Naive thymus-derived CD4-positive, alpha-beta T cell (primary cell): ENCODE measurements at regions of chr12 and their contacts with region 1.

Region 1: DNA sequence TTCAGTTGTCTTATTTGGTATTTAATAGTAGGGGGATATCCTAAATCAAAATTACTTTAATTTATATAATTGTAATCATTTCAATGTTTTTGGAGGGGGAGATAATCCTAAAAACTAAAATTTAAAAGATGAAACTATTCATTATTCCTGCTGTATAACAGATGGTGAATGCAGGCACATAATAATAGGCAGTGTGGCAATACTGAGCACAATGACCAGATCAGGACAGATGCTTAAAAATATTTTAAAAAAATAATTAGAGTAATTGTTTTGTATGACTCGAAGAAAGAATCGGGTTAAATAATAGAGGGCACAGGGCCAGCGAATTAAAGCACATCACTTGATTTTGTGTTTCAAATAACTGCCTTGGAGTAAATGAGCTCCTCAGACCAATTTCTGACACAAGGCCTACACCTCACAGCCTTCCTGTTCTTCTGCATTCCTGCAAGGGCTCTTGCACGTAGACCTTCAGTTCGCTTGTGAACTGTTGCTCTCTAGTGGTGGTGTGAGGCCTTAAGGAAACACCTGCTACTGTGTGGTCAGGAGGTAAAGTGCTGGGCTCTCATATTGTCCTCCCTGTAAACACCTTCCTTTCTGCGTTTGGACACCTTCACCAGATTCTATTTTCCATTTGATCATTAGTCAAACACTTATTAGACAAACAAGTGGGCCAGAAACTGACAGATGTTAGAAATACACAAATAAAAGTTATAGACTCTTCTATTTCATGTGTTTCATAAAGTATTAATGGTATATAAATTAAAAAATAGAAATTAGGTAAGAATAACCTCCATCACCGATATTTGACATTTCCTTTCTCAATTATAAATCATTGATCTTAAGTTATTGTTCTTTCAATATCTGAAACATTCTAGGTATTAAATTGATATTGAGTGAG is 29.3 kb upstream of the KLRF1 start:
- DNase-seq: peak in 8 of 9 donors; percentile 56 to 81 (median 73)
- ATAC-seq: peak; percentile 95
- H3K4me3 ChIP-seq: no peak overlapping the region
- H3K4me3 Mint-ChIP-seq: peak overlapping the region in 9 of 10 donors; percentile 6 to 53 (median 42)
- H3K27ac ChIP-seq: peak overlapping the region; percentile 64
- H3K27ac Mint-ChIP-seq: peak overlapping the region; percentile 39 to 89 (median 76)
- H3K4me1 ChIP-seq: peaks cover 38 to 44% of the 10 kb centered on the region in 2 donors
- H3K4me1 Mint-ChIP-seq: peaks cover 40 to 54% (median 50%) of the 10 kb centered on the region in 7 donors
- H3K27me3 ChIP-seq: no peaks in the 10 kb centered on the region
- H3K27me3 Mint-ChIP-seq: peaks cover 0 to 15% (median 0%) of the 10 kb centered on the region in 5 donors

Region 2: DNA sequence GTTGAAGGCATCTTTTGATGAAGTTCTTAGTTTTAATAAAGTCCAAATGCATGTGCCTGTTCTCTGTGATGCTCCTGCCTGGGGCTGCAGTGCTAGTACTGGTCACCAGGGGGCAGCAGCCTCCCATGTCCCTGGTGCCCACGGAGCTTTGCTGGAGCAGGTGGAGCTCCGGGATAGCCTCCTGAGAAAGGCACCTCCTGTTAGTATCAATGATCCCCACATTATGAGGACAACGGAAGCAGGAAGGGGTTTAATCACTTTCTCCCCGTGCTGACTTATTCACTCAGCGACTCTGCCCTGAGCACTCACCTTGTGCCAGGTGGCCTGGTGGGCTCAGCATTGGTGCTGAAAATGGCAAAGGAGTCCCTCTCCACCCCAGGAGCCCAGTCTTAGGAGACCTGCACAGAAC is 466.7 kb before region 1 on chr12:
- CTCF ChIA-PET with region 1: interaction called, 3 read pairs
- POLR2A ChIA-PET with region 1: no interaction called
- intact Hi-C with region 1: loop called in 1 of 2 experiments (anchors 10 kb)
- DNase-seq: peak; percentile 21 to 77 (median 55)
- ATAC-seq: peak; percentile 87
- H3K4me3 ChIP-seq: no peak overlapping the region
- H3K4me3 Mint-ChIP-seq: peak overlapping the region in 2 of 10 donors; percentile 6 to 33
- H3K27ac ChIP-seq: no peak overlapping the region
- H3K27ac Mint-ChIP-seq: peak overlapping the region in 4 of 9 donors; percentile 50 to 66 (median 62)
- H3K4me1 ChIP-seq: peaks cover 0 to 3% of the 10 kb centered on the region in 2 donors
- H3K4me1 Mint-ChIP-seq: peaks cover 18 to 31% (median 23%) of the 10 kb centered on the region in 7 donors
- H3K27me3 ChIP-seq: no peaks in the 10 kb centered on the region
- H3K27me3 Mint-ChIP-seq: peaks cover 0 to 2% (median 0%) of the 10 kb centered on the region in 5 donors

Region 3: DNA sequence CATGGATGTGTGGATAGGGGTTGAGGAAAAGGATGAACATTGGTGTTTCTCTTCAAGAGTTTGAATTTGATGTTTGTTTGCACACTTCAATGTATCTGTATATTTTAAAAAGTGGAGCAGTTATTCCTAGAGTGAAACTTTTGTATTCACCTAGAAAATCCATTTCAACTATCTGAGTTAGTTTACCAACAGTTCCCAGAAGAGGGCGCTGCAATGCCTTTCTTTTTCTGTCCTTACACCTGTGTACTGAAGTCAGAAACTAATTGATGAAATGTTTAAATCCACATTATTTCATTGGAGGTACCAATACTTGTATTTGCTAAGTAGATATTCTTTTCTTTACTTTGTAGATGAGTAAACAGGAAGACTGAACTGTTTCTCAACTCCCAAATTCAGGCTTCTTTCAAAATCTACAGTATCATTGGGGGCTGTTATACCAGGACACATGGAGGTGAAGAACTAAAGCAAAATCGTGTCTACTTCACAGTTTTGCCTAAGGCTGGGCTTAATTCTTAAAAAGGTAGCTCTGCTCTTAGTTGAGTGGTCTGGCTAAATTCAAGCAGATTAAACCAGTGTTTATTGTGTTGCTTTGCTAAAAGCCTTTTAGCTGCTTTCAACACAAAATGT is 163.7 kb before region 1 on chr12:
- CTCF ChIA-PET with region 1: interaction called, 3 read pairs
- POLR2A ChIA-PET with region 1: interaction called, 5 read pairs
- intact Hi-C with region 1: loop called (anchors 1 kb)
- DNase-seq: peak; percentile 45 to 84 (median 75)
- ATAC-seq: peak; percentile 90
- H3K4me3 ChIP-seq: no peak overlapping the region
- H3K4me3 Mint-ChIP-seq: peak overlapping the region in 9 of 10 donors; percentile 15 to 78 (median 73)
- H3K27ac ChIP-seq: peak overlapping the region; percentile 40
- H3K27ac Mint-ChIP-seq: peak overlapping the region; percentile 78 to 97 (median 91)
- H3K4me1 ChIP-seq: peaks cover 23 to 33% of the 10 kb centered on the region in 2 donors
- H3K4me1 Mint-ChIP-seq: peaks cover 24 to 80% (median 66%) of the 10 kb centered on the region in 7 donors
- H3K27me3 ChIP-seq: no peaks in the 10 kb centered on the region
- H3K27me3 Mint-ChIP-seq: peaks cover 0 to 20% (median 0%) of the 10 kb centered on the region in 5 donors

Region 4: GRCh38 chr12:9662500-9662899 is 135.5 kb before region 1 on chr12:
- CTCF ChIA-PET with region 1: no interaction called
- POLR2A ChIA-PET with region 1: no interaction called
- intact Hi-C with region 1: no loop called
- DNase-seq: no peak
- ATAC-seq: peak; percentile 49
- H3K4me3 ChIP-seq: peak overlapping the region; percentile 25
- H3K4me3 Mint-ChIP-seq: peak overlapping the region; percentile 6 to 98 (median 60)
- H3K27ac ChIP-seq: peak overlapping the region; percentile 75
- H3K27ac Mint-ChIP-seq: peak overlapping the region; percentile 65 to 99 (median 86)
- H3K4me1 ChIP-seq: peaks cover 42 to 73% of the 10 kb centered on the region in 2 donors
- H3K4me1 Mint-ChIP-seq: peaks cover 73 to 99% (median 94%) of the 10 kb centered on the region in 7 donors
- H3K27me3 ChIP-seq: no peaks in the 10 kb centered on the region
- H3K27me3 Mint-ChIP-seq: no peaks in the 10 kb centered on the region

Region 5: DNA sequence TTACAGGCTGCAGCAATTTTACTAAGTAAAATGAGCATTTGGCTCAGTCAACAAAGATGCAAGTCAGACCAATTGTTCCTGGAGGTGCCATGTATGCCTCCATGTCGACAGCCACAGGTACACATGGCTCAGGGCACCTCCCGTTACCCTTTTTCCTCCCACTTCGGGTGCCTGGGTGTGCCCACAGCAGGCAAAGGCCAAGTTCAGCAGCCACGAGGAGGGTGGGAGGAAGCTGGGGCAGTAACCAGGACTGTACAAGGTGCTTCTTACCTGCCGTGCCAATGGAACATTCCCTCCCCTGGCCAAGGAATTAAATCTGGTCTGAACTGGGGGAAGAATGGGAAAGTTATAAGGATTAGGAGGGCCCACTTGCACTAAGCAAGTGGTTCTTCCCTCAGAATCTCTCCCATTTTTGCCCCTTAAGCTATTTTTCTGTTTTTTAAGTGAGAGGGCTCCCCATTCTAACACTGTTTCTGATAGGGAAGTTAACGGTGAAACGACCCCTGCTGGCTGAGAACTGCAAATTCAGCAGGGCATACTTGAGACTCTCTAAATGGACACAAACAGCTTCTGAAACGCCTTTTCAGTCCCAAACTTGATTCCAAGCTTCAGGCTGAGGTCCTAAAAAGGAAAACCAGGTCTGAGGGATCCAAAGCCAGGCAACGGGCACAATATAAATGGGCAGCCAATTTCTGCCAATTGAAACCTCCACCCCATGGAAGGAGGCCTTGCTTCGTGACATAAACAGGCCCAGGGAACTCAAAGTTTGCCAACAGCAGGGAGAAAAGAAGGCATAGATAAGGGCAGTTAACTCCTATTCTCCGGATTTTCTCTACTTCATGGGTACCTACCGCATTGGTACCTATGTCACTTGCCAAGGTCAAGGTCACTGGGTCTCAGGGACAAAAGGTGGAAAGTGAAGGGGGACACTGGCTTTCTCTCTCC is 89.8 kb before region 1 on chr12:
- CTCF ChIA-PET with region 1: interaction called, 13 read pairs
- POLR2A ChIA-PET with region 1: interaction called, 4 read pairs
- intact Hi-C with region 1: no loop called
- DNase-seq: peak; percentile 35 to 79 (median 72)
- ATAC-seq: peak; percentile 92
- H3K4me3 ChIP-seq: peak overlapping the region; percentile 46
- H3K4me3 Mint-ChIP-seq: peak overlapping the region; percentile 56 to 82 (median 73)
- H3K27ac ChIP-seq: peak overlapping the region; percentile 66
- H3K27ac Mint-ChIP-seq: peak overlapping the region; percentile 80 to 98 (median 95)
- H3K4me1 ChIP-seq: peaks cover 30 to 31% of the 10 kb centered on the region in 2 donors
- H3K4me1 Mint-ChIP-seq: peaks cover 34 to 86% (median 81%) of the 10 kb centered on the region in 7 donors
- H3K27me3 ChIP-seq: no peaks in the 10 kb centered on the region
- H3K27me3 Mint-ChIP-seq: no peaks in the 10 kb centered on the region

Region 6: GRCh38 chr12:9760699-9761418 is 37.1 kb before region 1 on chr12 and contains the start of gene CD69:
- CTCF ChIA-PET with region 1: interaction called, 616 read pairs
- POLR2A ChIA-PET with region 1: interaction called, 433 read pairs
- intact Hi-C with region 1: loop called in 1 of 2 experiments (anchors 2 kb)
- DNase-seq: peak; percentile 50 to 92 (median 85)
- ATAC-seq: peak; percentile 75
- H3K4me3 ChIP-seq: peak within 1 kb of the TSS; percentile 70
- H3K4me3 Mint-ChIP-seq: peak within 1 kb of the TSS; percentile 87 to 99 (median 97)
- H3K27ac ChIP-seq: peak within 1 kb of the TSS; percentile 98
- H3K27ac Mint-ChIP-seq: peak within 1 kb of the TSS; percentile 97 to 100 (median 100)
- H3K4me1 ChIP-seq: peaks cover 34 to 51% of the 10 kb centered on the region in 2 donors
- H3K4me1 Mint-ChIP-seq: peaks cover 31 to 65% (median 55%) of the 10 kb centered on the region in 7 donors
- H3K27me3 ChIP-seq: no peaks in the 10 kb centered on the region
- H3K27me3 Mint-ChIP-seq: no peaks in the 10 kb centered on the region
- total RNA-seq, gene CD69: 25.8 to 588 (median 125) TPM

Region 7: DNA sequence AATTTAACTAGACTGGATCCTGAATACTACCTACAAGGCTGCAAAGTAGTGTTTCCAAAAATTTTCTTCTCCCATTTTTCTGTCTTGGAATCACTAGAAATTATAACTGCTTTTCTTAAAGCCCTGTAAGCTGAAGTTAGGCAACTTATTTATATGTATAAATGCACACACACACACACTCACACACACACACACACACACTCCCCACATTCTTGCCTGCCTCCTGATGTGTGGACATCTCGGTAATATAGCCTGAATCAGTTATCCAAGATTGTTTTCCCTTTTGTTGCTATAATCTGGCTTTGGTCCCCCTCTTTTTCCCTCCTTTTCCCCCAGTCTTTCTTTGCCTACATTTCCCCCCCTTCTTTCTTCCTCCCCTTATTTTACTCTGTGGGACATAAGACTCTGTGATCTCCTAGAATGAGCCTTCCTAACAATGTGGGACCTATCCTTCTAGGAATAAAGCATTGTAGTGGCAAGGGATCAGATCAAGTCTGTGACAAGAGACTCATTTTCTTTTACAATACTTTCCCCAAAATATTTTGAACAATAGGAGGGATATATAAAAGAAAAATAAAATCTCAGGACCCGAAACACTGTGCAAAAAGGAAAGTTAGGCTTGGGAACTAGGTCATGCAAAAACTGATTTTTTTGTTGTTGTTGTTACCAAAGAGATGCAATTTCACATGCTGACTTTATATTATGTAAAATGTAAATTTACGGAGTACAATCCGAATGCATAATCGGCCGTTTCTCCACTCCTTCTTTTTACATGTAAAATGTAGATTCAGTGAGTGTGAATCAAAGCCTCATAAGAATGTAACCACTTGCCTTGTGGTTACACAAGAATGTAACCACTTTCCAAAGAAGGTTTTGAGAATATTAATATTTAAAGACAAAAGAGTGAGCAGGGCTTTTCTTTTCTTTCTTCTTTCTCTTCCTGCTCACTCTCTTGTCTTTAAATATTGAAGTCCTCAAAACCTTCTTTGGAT is 10.9 kb before region 1 on chr12:
- CTCF ChIA-PET with region 1: interaction called, 9 read pairs
- POLR2A ChIA-PET with region 1: interaction called, 3 read pairs
- intact Hi-C with region 1: loop called in 1 of 2 experiments (anchors 1 kb)
- DNase-seq: no peak
- ATAC-seq: no peak
- H3K4me3 ChIP-seq: no peak overlapping the region
- H3K4me3 Mint-ChIP-seq: no peak overlapping the region
- H3K27ac ChIP-seq: no peak overlapping the region
- H3K27ac Mint-ChIP-seq: peak overlapping the region in 1 of 9 donors; percentile 58
- H3K4me1 ChIP-seq: no peaks in the 10 kb centered on the region
- H3K4me1 Mint-ChIP-seq: peaks cover 11 to 35% (median 22%) of the 10 kb centered on the region in 7 donors
- H3K27me3 ChIP-seq: no peaks in the 10 kb centered on the region
- H3K27me3 Mint-ChIP-seq: no peaks in the 10 kb centered on the region

Region 8: DNA sequence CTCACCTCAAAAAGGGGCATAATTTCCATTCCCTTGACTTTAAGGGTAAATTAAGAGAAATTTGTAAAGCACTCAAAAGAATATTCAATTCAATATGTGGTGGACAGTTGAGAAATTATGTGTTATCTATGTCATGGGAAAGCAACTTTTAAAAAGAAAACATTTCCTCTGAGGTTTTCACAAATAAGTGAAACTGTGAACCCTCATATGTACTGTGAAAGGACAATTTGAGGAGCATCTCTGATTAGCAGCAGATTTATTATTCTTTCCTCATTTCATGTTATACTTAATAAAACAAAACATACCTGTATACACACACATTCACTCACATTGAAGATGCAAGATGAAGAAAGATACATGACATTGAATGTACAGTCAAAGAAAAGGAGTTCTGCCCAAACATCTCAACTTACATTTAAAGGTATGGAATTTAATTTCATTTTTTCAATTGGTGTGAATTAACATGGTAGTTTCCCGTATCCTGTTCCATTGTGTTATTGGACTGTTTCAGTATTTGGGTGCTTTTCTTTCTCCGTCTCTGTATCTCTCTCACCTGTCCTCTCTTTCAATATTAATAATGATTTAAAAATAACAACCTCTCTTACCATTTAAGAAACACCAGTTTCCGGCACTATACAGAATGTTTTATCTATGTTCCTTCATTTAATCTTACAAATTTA is 29.4 kb after region 1 on chr12 and contains the start of gene KLRF1:
- CTCF ChIA-PET with region 1: no interaction called
- POLR2A ChIA-PET with region 1: no interaction called
- intact Hi-C with region 1: no loop called
- DNase-seq: no peak
- ATAC-seq: peak; percentile 42
- H3K4me3 ChIP-seq: no peak within 1 kb of the TSS
- H3K4me3 Mint-ChIP-seq: peak within 1 kb of the TSS in 2 of 10 donors; percentile 16 to 85
- H3K27ac ChIP-seq: no peak within 1 kb of the TSS
- H3K27ac Mint-ChIP-seq: peak within 1 kb of the TSS in 1 of 9 donors; percentile 25
- H3K4me1 ChIP-seq: no peaks in the 10 kb centered on the region
- H3K4me1 Mint-ChIP-seq: peaks cover 0 to 6% (median 3%) of the 10 kb centered on the region in 7 donors
- H3K27me3 ChIP-seq: no peaks in the 10 kb centered on the region
- H3K27me3 Mint-ChIP-seq: peaks cover 0 to 54% (median 0%) of the 10 kb centered on the region in 5 donors
- total RNA-seq, gene KLRF1: 0.35 to 34.8 (median 1.0) TPM

Region 9: DNA sequence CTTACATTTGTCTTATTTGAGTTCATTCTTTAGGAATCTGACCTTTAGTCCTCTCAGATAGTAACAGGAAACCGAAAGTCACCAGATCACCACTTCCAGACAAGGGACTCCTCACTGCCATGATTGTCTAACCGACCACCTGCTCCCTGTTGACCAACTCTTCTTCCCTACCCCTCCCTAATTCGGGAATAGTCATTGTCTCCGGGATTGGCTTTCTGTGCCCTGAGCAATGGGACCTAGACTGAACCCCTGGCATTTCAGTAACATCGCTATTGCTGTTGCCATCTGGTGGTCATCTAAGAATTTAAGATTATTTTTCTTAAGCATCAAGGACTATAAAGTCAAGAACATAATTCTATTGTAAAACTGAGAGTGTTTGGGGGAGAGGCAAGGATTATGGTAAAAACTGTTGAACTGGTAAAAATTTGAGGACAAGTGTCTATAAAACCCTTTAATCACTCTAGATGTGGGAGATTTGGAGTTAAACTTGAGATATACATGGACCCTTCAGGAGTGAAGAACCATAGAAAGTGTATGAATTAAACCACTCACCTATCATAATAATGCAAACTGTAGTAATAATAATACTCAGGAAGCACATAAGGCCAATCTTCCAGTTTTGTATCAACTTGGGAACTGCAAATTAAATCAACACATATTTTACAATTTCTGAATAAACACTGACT is 127.9 kb after region 1 on chr12:
- CTCF ChIA-PET with region 1: interaction called, 4 read pairs
- POLR2A ChIA-PET with region 1: interaction called, 3 read pairs
- intact Hi-C with region 1: loop called in 1 of 2 experiments (anchors 1 kb)
- DNase-seq: peak in 8 of 9 donors; percentile 7 to 64 (median 50)
- ATAC-seq: peak; percentile 73
- H3K4me3 ChIP-seq: no peak overlapping the region
- H3K4me3 Mint-ChIP-seq: peak overlapping the region; percentile 30 to 85 (median 73)
- H3K27ac ChIP-seq: no peak overlapping the region
- H3K27ac Mint-ChIP-seq: peak overlapping the region in 6 of 9 donors; percentile 5 to 93 (median 44)
- H3K4me1 ChIP-seq: peaks cover 0 to 6% of the 10 kb centered on the region in 2 donors
- H3K4me1 Mint-ChIP-seq: peaks cover 0 to 26% (median 18%) of the 10 kb centered on the region in 7 donors
- H3K27me3 ChIP-seq: no peaks in the 10 kb centered on the region
- H3K27me3 Mint-ChIP-seq: peaks cover 0 to 23% (median 0%) of the 10 kb centered on the region in 5 donors

Region 10: DNA sequence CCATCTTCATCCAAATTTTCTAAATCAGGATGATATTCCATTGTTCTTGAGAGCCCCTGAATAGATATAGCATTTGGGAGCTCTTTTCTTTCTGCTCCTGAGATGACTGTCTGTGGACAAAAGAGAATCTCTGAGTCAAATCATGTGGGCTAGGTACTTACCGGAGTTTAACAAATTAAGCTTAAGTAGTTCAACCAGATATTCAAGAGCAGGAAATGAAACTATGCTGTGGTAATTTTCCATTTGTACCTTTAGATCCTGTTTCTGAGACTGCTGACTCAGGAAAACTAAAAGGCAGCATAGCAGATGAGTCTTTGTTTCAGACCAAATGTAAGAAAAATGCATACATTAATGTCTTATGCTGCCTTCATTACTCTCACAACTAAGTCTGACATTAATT is 332.1 kb after region 1 on chr12 and contains the start of gene CLEC7A:
- CTCF ChIA-PET with region 1: no interaction called
- POLR2A ChIA-PET with region 1: no interaction called
- intact Hi-C with region 1: no loop called
- DNase-seq: peak in 1 of 9 donors; percentile 9
- ATAC-seq: peak; percentile 49
- H3K4me3 ChIP-seq: no peak within 1 kb of the TSS
- H3K4me3 Mint-ChIP-seq: no peak within 1 kb of the TSS
- H3K27ac ChIP-seq: no peak within 1 kb of the TSS
- H3K27ac Mint-ChIP-seq: no peak within 1 kb of the TSS
- H3K4me1 ChIP-seq: peaks cover 0 to 6% of the 10 kb centered on the region in 2 donors
- H3K4me1 Mint-ChIP-seq: peaks cover 4 to 19% (median 7%) of the 10 kb centered on the region in 7 donors
- H3K27me3 ChIP-seq: no peaks in the 10 kb centered on the region
- H3K27me3 Mint-ChIP-seq: peaks cover 0 to 53% (median 10%) of the 10 kb centered on the region in 5 donors
- total RNA-seq, gene CLEC7A: 1.5 to 121 (median 7.2) TPM in 4 of 5 experiments, not detected in the other